ENCODE measurements at regions of chr7 and their contacts with region 1.

Region 1: DNA sequence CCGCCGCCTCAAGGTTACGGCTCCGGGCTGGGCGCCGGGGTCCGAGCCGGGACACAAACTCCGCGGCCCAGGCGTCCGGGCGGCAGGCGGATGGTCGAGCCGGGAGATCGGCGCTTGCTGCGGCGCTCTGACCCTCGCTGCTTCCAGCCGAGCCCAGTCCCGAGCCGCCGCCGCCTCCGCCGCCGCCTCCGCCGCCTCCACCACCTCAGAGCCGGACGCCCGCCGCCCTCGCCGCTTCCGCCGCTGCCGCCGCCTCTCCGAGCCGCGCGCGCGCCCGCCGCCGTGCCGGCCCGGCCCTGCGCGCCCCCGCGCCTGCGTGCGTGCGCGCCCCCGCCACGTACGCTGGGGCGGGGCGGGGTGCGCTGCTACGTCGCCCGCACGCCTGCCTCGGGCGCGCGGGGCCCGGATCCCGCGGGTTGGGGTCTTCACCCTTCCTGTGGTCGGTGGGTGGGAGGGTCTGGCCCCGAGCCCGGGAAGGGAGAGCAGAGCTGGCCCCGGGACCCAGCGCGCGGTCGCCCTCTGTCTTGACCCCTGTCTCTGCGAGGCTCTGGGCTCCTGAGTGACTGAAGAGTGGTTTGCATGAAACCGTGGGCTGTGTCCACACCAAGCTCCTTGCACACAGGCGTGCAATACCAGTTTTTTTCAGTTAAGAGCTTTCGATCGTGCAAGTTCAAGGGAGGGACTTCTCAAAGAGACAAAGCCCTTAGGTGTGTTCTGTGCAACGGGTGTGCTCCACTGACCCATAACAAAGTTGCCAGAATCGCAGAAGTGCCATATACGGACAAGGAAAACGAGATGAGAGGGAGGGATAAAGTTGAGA is at the start of gene SMURF1:
- DNase-seq: peak; percentile 69 to 85 (median 76)
- ATAC-seq: peak; percentile 17 to 86 (median 66)
- H3K4me3 ChIP-seq: peak within 1 kb of the TSS; percentile 77 to 100 (median 99)
- H3K27ac ChIP-seq: peak within 1 kb of the TSS; percentile 89 to 100 (median 98)
- H3K4me1 ChIP-seq: peaks cover 0 to 40% (median 23%) of the 10 kb centered on the region in 12 donors
- H3K27me3 ChIP-seq: no peaks in the 10 kb centered on the region
- CTCF ChIP-seq: peak in 3 of 12 donors; percentile 19 to 29 (median 23)
- POLR2A ChIP-seq: peak in 1 of 2 donors; percentile 74
- total RNA-seq, gene SMURF1: 8.0 to 15.4 (median 13.2) TPM

Region 2: DNA sequence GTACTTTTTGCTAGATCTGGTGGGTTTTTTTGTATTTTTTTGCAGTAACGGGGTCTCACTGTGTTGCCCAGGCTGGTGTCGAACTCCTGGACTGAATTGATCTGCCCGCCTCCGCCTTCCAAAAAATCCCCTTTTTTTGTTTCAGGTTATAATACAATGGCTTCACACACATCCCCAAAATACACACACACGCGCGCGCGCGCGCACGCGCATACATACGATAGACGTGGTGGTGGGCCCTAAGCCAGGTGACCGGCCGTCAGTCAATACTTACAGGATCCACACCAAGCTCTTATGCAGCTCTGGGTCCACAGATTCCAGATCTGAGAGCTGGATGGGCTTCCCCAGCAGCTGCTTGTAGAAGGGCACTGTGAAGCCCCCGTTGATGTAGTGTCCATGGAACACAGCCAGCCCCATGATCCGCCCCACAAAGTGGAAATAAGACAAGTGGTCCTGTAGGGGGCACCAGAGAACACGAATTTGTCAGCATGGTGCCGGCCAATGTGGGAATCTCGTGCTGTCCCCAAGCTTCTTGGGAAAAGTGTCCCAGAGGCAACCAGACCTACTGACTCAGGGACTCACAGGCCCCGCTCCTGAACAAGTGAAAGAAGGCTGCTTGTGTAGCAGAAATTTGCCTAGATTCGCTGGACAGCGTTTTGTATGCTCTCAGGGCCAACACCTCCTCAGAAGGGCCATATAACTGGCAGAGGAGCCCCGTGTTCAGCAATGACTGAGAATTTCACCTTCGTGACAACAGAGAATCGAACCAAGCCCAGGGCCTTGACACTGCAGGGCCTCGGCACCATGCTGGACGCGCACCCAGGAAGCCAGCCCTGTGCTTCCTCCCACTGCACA is 103.7 kb before region 1 on chr7:
- intact Hi-C with region 1: loop called (anchors 5 to 10 kb)
- DNase-seq: peak; percentile 78 to 91 (median 85)
- ATAC-seq: peak; percentile 74 to 84 (median 82)
- H3K4me3 ChIP-seq: no peak overlapping the region
- H3K27ac ChIP-seq: peak overlapping the region in 11 of 12 donors; percentile 32 to 70 (median 46)
- H3K4me1 ChIP-seq: peaks cover 0 to 34% (median 4%) of the 10 kb centered on the region in 12 donors
- H3K27me3 ChIP-seq: no peaks in the 10 kb centered on the region
- CTCF ChIP-seq: peak; percentile 68 to 85 (median 76)
- POLR2A ChIP-seq: no peak

Region 3: GRCh38 chr7:99046722-99047121 is 97.3 kb before region 1 on chr7:
- intact Hi-C with region 1: loop called (anchors 5 to 10 kb)
- DNase-seq: no peak
- ATAC-seq: no peak
- H3K4me3 ChIP-seq: no peak overlapping the region
- H3K27ac ChIP-seq: no peak overlapping the region
- H3K4me1 ChIP-seq: peaks cover 0 to 13% (median 0%) of the 10 kb centered on the region in 12 donors
- H3K27me3 ChIP-seq: no peaks in the 10 kb centered on the region
- CTCF ChIP-seq: no peak
- POLR2A ChIP-seq: no peak

Region 4: GRCh38 chr7:99098824-99099498 is 45.1 kb before region 1 on chr7:
- intact Hi-C with region 1: loop called in 2 of 10 experiments (anchors 5 kb)
- DNase-seq: no peak
- ATAC-seq: peak in 2 of 4 donors; percentile 20 to 32
- H3K4me3 ChIP-seq: no peak overlapping the region
- H3K27ac ChIP-seq: peak overlapping the region in 8 of 12 donors; percentile 9 to 61 (median 29)
- H3K4me1 ChIP-seq: peaks cover 0 to 47% (median 17%) of the 10 kb centered on the region in 12 donors
- H3K27me3 ChIP-seq: no peaks in the 10 kb centered on the region
- CTCF ChIP-seq: no peak
- POLR2A ChIP-seq: no peak

Region 5: GRCh38 chr7:99312316-99313203 is 168.5 kb after region 1 on chr7:
- intact Hi-C with region 1: loop called in 3 of 10 experiments (anchors 5 to 10 kb)
- DNase-seq: peak in 4 of 5 donors; percentile 46 to 67 (median 62)
- ATAC-seq: peak; percentile 47 to 81 (median 74)
- H3K4me3 ChIP-seq: peak overlapping the region in 1 of 12 donors; percentile 33
- H3K27ac ChIP-seq: no peak overlapping the region
- H3K4me1 ChIP-seq: peaks cover 0 to 8% (median 0%) of the 10 kb centered on the region in 12 donors
- H3K27me3 ChIP-seq: no peaks in the 10 kb centered on the region
- CTCF ChIP-seq: peak; percentile 83 to 97 (median 91)
- POLR2A ChIP-seq: no peak

Region 6: GRCh38 chr7:99325545-99326407 is 181.7 kb after region 1 on chr7 and contains the start of gene ARPC1A:
- intact Hi-C with region 1: loop called in 5 of 10 experiments (anchors 5 to 10 kb)
- DNase-seq: peak; percentile 91 to 96 (median 92)
- ATAC-seq: peak; percentile 88 to 95 (median 92)
- H3K4me3 ChIP-seq: peak within 1 kb of the TSS; percentile 69 to 100 (median 92)
- H3K27ac ChIP-seq: peak within 1 kb of the TSS; percentile 77 to 95 (median 88)
- H3K4me1 ChIP-seq: peaks cover 7 to 58% (median 46%) of the 10 kb centered on the region in 12 donors
- H3K27me3 ChIP-seq: no peaks in the 10 kb centered on the region
- CTCF ChIP-seq: peak in 5 of 12 donors; percentile 6 to 30 (median 24)
- POLR2A ChIP-seq: peak in 1 of 2 donors; percentile 80
- total RNA-seq, gene ARPC1A: 97.1 to 177 (median 146) TPM